Mammary epithelial cell (primary cell): ENCODE measurements at regions of chr17 and their contacts with region 1.

Region 1: DNA sequence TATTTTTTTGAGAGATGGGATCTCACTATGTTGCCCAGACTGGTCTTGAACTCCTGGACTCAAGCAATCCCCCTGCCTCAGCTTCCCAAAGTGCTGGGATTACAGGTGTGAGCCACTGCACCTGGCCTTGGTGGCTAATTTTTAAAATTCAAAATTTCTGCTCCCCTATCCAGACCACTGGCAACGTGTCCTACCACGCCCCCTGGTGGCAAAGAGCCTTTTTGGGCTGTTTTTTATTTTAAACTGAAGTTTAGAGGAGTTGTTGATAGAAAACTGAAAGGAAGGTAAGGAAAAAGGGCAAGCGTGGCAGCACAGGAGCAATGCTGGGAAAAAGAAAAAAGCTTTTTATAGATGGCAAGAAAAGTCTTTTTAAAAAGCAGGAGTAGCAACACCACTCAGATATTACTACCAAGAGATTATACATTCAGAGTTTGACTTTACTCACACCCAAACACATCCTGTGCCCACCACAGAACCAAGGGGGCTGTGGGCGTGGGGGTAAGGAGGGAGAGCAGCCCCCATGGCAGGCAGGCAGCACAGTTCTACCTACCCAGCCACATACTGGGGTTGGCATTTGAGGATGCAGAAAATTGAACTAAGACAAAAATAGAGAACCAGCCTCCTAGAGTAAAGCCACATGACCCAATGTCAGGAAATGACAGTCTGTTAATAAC is 4.2 kb upstream of the MXRA7 start:
- DNase-seq: no peak
- H3K4me3 ChIP-seq: no peak overlapping the region
- H3K27ac ChIP-seq: no peak overlapping the region
- H3K4me1 ChIP-seq: peaks cover 10% of the 10 kb centered on the region
- H3K27me3 ChIP-seq: no peaks in the 10 kb centered on the region
- CTCF ChIP-seq: peak; percentile 79 to 84

Region 2: DNA sequence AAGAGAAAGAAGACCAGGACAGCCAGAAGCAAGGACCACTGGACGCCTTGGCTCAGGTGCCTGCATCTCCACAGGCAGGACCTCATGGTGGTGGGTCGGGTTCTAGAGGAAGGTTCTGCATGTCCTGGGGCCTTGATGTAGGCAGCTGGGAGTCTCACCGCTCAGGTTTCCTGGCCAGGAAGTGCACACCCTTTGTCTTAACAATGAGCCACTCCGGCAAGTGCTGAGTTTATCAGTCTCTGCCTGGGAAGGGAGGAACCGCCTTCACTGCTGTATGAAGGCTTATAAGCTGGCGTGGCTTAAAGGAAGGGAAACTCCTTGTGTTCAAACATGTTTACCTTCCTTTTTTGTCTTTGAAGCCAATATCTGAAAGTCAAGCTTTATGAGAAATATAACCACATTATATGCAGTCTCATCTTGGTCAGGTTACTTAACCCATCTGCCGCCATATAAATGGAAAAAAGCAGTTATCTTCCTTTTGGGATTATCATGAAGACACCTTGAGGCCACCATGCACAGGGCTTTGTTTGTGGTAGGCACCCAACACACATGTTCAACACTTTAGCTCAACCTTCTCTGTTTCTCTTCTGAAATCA is 71.3 kb before region 1 on chr17 and contains the start of gene ST6GALNAC1:
- CTCF ChIA-PET with region 1: no interaction called
- dilution Hi-C with region 1: no loop called
- in situ Hi-C with region 1: no loop called
- intact Hi-C with region 1: no loop called
- DNase-seq: no peak
- H3K4me3 ChIP-seq: no peak within 1 kb of the TSS
- H3K27ac ChIP-seq: no peak within 1 kb of the TSS
- H3K4me1 ChIP-seq: peaks cover 4% of the 10 kb centered on the region
- H3K27me3 ChIP-seq: no peaks in the 10 kb centered on the region
- CTCF ChIP-seq: no peak
- total RNA-seq, gene ST6GALNAC1: not detected

Region 3: DNA sequence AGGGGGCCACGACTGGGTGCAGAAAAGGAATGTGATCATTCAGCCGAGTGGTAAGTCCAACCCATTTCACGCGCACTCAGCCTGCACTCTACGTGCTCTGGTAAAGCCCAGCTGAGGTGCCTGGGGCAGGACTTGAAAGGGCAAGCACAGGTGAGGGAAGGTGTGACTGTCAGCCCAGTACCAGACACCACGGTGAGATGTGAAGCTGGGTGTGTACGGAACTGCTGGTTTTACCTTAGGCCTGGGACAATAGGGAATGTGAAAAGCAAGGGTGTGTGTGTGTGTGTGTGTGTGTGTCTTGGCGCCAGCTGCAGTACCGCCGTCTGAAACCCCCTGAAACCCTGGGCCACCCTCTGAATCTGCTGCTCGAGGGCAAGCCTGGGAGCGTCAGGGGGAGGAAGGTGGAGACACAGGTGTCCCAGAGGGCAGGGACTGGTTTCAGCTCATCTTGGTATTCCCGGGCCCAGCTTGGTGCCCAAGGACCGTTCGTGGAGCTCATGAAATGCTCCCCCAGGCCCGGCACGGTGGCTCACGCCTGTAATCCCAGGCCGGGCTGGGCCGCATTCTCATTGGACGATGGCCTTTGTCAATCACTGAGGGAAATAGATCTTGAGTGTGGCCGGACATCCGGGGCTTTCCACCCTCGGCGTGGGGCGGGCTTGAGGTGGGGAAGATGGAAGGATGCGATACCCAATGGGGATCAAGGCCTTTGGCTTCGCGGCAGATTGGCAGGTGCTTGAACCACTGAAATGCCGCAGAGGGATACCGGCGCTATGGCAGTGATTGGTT is 43.6 kb before region 1 on chr17:
- CTCF ChIA-PET with region 1: no interaction called
- dilution Hi-C with region 1: no loop called
- in situ Hi-C with region 1: no loop called
- intact Hi-C with region 1: loop called (anchors 5 kb)
- DNase-seq: peak; percentile 100
- H3K4me3 ChIP-seq: peak overlapping the region; percentile 68 to 81 (median 72)
- H3K27ac ChIP-seq: peak overlapping the region; percentile 33
- H3K4me1 ChIP-seq: peaks cover 17% of the 10 kb centered on the region
- H3K27me3 ChIP-seq: no peaks in the 10 kb centered on the region
- CTCF ChIP-seq: no peak

Region 4: GRCh38 chr17:76758570-76758969 is 43.6 kb after region 1 on chr17:
- CTCF ChIA-PET with region 1: no interaction called
- dilution Hi-C with region 1: no loop called
- in situ Hi-C with region 1: no loop called
- intact Hi-C with region 1: no loop called
- DNase-seq: no peak
- H3K4me3 ChIP-seq: no peak overlapping the region
- H3K27ac ChIP-seq: no peak overlapping the region
- H3K4me1 ChIP-seq: peaks cover 13% of the 10 kb centered on the region
- H3K27me3 ChIP-seq: no peaks in the 10 kb centered on the region
- CTCF ChIP-seq: no peak